ENCODE measurements at regions of chr15 and their contacts with region 1.

Region 1: GRCh38 chr15:26260517-26261133 is 397.5 kb upstream of the ATP10A start:
- DNase-seq: peak; percentile 35
- ATAC-seq: no peak
- H3K4me3 Mint-ChIP-seq: no peak overlapping the region
- H3K27ac Mint-ChIP-seq: no peak overlapping the region
- H3K4me1 Mint-ChIP-seq: no peaks in the 10 kb centered on the region
- H3K27me3 Mint-ChIP-seq: no peaks in the 10 kb centered on the region

Region 2: DNA sequence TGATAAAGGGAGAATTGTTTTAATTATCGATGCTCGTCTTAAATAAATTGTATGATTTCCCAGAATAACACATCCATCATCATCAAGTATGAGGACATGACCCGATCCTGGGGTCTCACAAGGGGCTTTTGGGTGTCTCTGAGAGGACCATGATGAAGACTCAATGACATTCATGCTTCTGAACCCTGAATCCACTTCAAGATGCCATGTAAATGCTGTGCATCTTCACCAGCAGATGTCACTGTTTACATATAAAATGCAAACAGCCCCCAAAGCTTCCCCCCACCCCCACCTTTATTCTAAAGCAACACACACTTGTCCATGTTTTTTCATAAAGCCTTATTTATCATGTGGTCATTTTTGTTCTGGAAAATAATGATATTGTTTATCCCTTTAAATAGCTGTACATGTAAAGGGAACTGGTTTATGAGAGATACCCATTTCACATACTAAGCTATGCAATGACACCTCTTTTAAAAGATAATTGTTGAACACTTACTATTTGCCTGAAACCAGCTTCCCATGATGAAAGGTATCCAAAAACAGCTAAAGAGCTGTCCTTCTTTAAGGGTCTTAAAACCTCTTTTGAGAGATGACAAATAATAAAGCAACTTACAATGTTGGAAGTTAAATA is 752.1 kb before region 1 on chr15:
- CTCF ChIA-PET with region 1: interaction called, 20 read pairs
- POLR2A ChIA-PET with region 1: no interaction called
- DNase-seq: peak; percentile 22
- ATAC-seq: no peak
- H3K4me3 Mint-ChIP-seq: no peak overlapping the region
- H3K27ac Mint-ChIP-seq: no peak overlapping the region
- H3K4me1 Mint-ChIP-seq: no peaks in the 10 kb centered on the region
- H3K27me3 Mint-ChIP-seq: no peaks in the 10 kb centered on the region

Region 3: DNA sequence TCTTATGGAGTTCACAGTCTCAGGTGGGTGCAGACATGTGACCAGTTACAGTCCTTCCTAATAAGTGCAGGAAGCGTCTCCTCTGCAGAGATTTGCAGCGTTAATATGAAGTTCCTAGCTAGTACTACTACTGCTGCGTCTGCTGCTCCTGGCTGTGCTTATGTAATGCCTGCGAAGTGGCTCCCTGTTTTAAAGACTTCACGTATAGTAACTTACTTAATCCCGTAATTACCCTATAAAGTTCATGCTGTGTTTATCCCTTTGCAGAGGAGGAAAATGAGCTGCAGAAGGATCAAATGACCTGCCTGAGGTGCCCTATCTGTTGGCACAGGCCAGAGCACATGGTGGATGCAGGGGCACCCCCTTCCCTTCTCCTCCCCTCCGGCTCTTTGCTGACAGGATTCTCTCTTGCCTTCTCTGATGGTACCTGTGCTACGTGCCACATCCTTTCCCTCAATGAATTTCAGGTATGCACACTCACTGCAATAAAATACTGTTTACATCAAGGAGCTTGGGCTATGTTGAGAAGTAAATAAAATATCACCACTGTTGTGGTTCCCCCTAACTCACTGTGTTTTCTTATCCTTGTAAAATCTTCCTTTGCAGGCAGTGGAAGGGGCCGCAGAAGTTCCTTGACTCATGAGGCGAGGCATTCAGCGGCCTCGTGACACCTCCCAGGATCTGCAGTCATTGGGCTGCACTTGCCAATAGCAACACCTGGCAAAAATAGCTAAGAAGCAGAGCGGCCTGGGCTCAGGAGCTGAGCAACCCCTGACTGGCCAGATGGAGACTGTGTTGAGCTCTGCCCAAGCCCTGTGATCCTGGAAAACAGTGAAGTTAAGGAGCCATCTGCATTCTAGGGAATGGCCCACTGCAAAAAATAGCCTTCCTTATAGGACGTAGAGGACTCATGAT is 208.6 kb before region 1 on chr15:
- CTCF ChIA-PET with region 1: no interaction called
- POLR2A ChIA-PET with region 1: no interaction called
- DNase-seq: no peak
- ATAC-seq: no peak
- H3K4me3 Mint-ChIP-seq: no peak overlapping the region
- H3K27ac Mint-ChIP-seq: no peak overlapping the region
- H3K4me1 Mint-ChIP-seq: no peaks in the 10 kb centered on the region
- H3K27me3 Mint-ChIP-seq: no peaks in the 10 kb centered on the region

Region 4: DNA sequence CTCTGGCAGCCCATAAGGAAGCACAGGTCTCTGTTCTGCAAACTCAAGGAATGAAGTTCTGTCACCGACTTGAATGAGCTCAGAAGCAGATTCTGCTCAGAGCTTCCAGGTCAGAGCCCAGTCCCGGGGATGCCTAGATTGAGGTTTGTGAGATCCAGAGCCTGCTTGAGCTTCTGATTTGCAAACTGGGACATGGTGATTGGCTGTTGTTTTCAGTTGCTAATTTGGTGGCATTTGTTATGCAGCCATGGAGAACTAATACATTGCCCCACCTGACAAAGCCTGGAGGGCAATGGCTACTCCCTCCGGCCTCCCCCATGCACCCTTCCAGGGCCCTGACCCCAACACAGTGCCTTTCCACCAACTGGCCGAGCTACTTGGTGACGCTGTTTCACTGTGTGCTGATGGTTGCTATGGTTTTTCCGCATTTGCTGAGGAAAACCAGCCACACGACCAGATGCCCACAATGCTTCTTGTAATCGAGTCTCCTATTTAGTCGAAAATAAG is 18.0 kb before region 1 on chr15:
- CTCF ChIA-PET with region 1: no interaction called
- POLR2A ChIA-PET with region 1: no interaction called
- DNase-seq: no peak
- ATAC-seq: no peak
- H3K4me3 Mint-ChIP-seq: no peak overlapping the region
- H3K27ac Mint-ChIP-seq: no peak overlapping the region
- H3K4me1 Mint-ChIP-seq: no peaks in the 10 kb centered on the region
- H3K27me3 Mint-ChIP-seq: no peaks in the 10 kb centered on the region

Measured in activated CD8-positive, alpha-beta T cell treated with anti-CD3 and anti-CD28 coated beads, Interleukin-2, amount 10 ng/mL, durations not matched to agents 7 days and 5 days (primary cell).